CD8-positive, alpha-beta T cell (primary cell): ENCODE measurements at regions of chr9 and their contacts with region 1.

Region 1: GRCh38 chr9:101951598-101951997 is 213.2 kb upstream of the GRIN3A start:
- DNase-seq: no peak
- ATAC-seq: no peak
- H3K4me3 ChIP-seq: no peak overlapping the region
- H3K4me3 Mint-ChIP-seq: no peak overlapping the region
- H3K27ac ChIP-seq: no peak overlapping the region
- H3K27ac Mint-ChIP-seq: no peak overlapping the region
- H3K4me1 ChIP-seq: no peaks in the 10 kb centered on the region
- H3K4me1 Mint-ChIP-seq: no peaks in the 10 kb centered on the region
- H3K27me3 ChIP-seq: no peaks in the 10 kb centered on the region
- H3K27me3 Mint-ChIP-seq: no peaks in the 10 kb centered on the region
- CTCF ChIP-seq: no peak

Region 2: DNA sequence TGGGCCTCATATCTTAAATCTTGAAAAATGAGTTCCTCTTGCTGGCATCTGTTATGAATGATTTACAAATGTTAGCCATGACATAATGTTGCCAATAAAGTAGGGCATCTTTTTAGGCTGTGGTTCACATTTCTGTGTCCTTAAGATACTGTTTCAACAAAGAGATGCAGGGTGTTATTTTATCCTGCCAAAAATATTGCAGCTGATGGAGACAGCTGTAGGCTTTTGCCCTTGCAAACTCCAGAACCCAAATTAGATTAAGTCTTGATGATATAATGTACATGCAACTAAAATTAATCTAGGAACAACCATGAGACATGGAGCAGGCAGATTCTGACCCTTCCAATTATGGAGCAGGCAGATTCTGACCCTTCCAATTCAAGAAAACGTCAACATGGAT is 15.1 kb after region 1 on chr9:
- CTCF ChIA-PET with region 1: no interaction called
- POLR2A ChIA-PET with region 1: no interaction called
- intact Hi-C with region 1: loop called (anchors 1 kb)
- DNase-seq: no peak
- ATAC-seq: no peak
- H3K4me3 ChIP-seq: no peak overlapping the region
- H3K4me3 Mint-ChIP-seq: no peak overlapping the region
- H3K27ac ChIP-seq: no peak overlapping the region
- H3K27ac Mint-ChIP-seq: no peak overlapping the region
- H3K4me1 ChIP-seq: no peaks in the 10 kb centered on the region
- H3K4me1 Mint-ChIP-seq: no peaks in the 10 kb centered on the region
- H3K27me3 ChIP-seq: no peaks in the 10 kb centered on the region
- H3K27me3 Mint-ChIP-seq: no peaks in the 10 kb centered on the region
- CTCF ChIP-seq: no peak